PC-9 (cell line): ENCODE measurements at regions of chr6 and their contacts with region 1.

Region 1: GRCh38 chr6:139407718-139408222 is 33.3 kb upstream of the CITED2 start:
- DNase-seq: peak; percentile 51 to 100
- H3K4me3 ChIP-seq: peak overlapping the region; percentile 15; the same call in 1 of the 2 replicates
- H3K27ac ChIP-seq: peak overlapping the region; percentile 94
- H3K4me1 ChIP-seq: peaks cover 41% of the 10 kb centered on the region
- H3K27me3 ChIP-seq: no peaks in the 10 kb centered on the region
- CTCF ChIP-seq: no peak

Region 2: DNA sequence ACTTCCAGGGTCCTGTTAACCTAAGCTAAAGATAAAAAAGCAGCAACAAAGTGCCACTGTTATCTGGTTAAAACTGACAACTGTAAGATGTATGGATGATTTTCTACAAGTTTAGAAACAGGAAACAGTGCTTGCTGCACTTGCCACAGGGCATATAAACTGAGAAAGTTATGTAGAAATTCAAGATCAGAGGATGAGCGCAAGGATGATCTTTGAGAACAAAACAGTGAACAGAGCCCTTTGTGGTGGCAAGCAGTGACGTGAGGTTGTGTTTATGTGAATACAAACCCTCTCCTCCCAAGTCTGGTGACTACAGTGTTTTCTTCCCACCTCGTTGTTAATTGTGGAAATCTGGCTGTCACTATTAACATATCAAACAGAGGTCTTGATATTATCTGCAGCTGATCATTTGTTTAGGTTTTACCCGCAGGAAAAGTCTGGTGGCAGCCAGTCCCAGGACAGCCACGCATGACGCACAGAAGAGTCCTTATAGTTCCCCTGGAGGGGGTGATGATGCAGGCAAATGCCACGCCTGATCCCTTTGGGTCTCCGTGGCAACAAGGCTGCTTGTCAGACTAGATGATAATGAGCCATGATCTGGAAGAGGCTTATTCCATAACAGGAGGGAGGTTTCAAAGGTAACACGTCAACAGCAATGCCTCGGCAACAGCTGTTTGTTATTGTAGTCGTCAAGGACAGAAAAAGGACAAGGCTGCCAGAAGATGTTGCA is 1583.8 kb before region 1 on chr6:
- CTCF ChIA-PET with region 1: no interaction called
- POLR2A ChIA-PET with region 1: no interaction called
- intact Hi-C with region 1: no loop called
- DNase-seq: no peak
- H3K4me3 ChIP-seq: no peak overlapping the region
- H3K27ac ChIP-seq: no peak overlapping the region
- H3K4me1 ChIP-seq: peaks cover 20% of the 10 kb centered on the region
- H3K27me3 ChIP-seq: no peaks in the 10 kb centered on the region
- CTCF ChIP-seq: no peak

Region 3: DNA sequence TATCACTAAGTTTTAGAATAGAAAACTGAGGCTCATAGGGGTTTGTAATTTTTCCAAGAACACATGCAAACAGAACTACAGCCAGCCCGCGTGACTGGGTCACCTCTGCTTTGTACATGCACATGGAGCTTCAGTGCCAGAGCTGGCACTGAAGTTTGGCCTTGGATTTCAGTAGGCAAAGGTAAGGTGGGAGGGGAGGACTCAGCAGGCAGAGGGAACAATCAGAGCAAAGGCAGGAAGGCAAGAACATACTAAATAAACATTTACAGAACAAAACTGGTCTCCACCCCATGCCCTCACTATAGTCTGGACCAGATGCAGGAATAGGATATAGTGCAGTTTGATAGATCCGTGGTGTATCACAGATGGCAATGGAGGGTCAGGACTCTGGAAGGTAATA is 392.8 kb before region 1 on chr6:
- CTCF ChIA-PET with region 1: no interaction called
- POLR2A ChIA-PET with region 1: no interaction called
- intact Hi-C with region 1: no loop called
- DNase-seq: no peak
- H3K4me3 ChIP-seq: no peak overlapping the region
- H3K27ac ChIP-seq: no peak overlapping the region
- H3K4me1 ChIP-seq: 0 out of 2 replicates have a peak, but pooled peaks cover 6% of the 10 kb centered on the region
- H3K27me3 ChIP-seq: no peaks in the 10 kb centered on the region
- CTCF ChIP-seq: no peak

Region 4: GRCh38 chr6:139418480-139419117 is 10.8 kb after region 1 on chr6:
- CTCF ChIA-PET with region 1: interaction called, 21 read pairs
- POLR2A ChIA-PET with region 1: no interaction called
- intact Hi-C with region 1: no loop called
- DNase-seq: no peak
- H3K4me3 ChIP-seq: no peak overlapping the region
- H3K27ac ChIP-seq: no peak overlapping the region
- H3K4me1 ChIP-seq: no peaks in the 10 kb centered on the region; the same call in 1 of the 2 replicates
- H3K27me3 ChIP-seq: no peaks in the 10 kb centered on the region
- CTCF ChIP-seq: no peak

Region 5: DNA sequence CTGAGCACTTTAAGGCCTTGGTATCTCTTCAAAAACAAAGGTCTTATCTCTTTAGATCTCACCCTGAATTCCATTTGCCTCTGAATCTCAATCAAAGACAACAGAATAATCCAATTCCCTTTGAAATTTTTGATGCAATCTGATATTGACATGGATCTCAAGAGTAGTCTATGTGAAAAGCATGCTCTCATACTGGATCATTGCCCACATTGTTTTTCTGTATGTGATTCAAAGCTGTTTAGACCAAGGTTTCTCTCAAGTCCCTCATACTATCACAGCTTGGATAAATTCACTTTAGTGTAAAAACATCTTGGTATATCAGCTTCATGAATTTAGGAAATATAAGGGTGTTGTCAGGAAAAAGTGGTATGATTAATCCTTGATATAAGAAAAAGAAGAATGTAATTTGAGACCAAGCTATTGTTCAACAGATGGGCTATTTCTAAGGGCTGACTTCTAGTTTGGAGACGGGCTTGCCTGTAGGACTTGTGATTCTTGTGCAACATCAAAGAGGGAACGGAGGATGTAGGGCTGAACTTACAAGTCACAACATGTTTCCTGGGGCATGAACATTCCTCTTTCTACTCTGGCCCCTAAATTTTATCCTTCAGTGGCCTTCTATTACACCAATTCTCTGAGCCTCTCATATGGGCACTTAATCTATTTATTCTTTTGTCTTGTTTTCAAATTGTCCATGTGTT is 44.6 kb after region 1 on chr6:
- CTCF ChIA-PET with region 1: no interaction called
- POLR2A ChIA-PET with region 1: no interaction called
- intact Hi-C with region 1: loop called (anchors 5 kb)
- DNase-seq: peak; percentile 16 to 33
- H3K4me3 ChIP-seq: no peak overlapping the region
- H3K27ac ChIP-seq: no peak overlapping the region
- H3K4me1 ChIP-seq: peaks cover 20% of the 10 kb centered on the region
- H3K27me3 ChIP-seq: no peaks in the 10 kb centered on the region
- CTCF ChIP-seq: no peak

Region 6: DNA sequence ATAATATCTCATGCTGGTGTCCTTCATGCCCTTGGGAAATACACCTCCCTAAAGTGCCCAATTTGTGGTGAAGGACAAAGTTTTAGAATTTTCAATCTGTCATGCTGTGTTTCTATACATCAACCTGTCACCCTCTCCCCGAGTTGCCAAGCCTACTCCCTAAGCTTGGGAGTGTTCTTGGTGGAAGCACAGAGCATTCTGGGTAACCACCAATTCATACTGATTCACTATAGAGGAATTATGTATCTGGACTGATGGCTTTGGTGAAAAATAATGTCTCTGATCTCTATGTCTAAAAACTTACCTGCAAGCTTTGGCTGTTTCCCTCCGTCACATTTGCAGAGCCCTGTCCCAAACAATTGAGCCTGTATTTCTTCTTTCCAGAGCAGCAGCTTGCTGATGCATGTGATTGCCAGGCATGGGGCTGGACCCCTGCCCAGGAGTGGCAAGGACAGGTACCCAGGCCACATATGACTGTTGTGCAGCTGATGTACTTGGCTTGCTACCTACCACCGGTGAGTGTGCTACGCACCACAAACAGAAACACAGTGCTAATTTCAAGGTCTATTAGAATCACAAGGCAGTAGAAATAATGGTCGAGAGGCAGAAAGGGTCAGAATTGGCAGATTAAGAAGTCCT is 169.5 kb after region 1 on chr6:
- CTCF ChIA-PET with region 1: no interaction called
- POLR2A ChIA-PET with region 1: no interaction called
- intact Hi-C with region 1: no loop called
- DNase-seq: peak in 1 of 2 experiments; percentile 26
- H3K4me3 ChIP-seq: no peak overlapping the region
- H3K27ac ChIP-seq: no peak overlapping the region
- H3K4me1 ChIP-seq: peaks cover 2% of the 10 kb centered on the region
- H3K27me3 ChIP-seq: no peaks in the 10 kb centered on the region
- CTCF ChIP-seq: no peak

Region 7: GRCh38 chr6:139623372-139623771 is 215.6 kb after region 1 on chr6:
- CTCF ChIA-PET with region 1: no interaction called
- POLR2A ChIA-PET with region 1: interaction called, 20 read pairs
- intact Hi-C with region 1: no loop called
- DNase-seq: no peak
- H3K4me3 ChIP-seq: no peak overlapping the region
- H3K27ac ChIP-seq: no peak overlapping the region
- H3K4me1 ChIP-seq: no peaks in the 10 kb centered on the region
- H3K27me3 ChIP-seq: no peaks in the 10 kb centered on the region
- CTCF ChIP-seq: no peak

Region 8: GRCh38 chr6:139743664-139744437 is 336.1 kb after region 1 on chr6:
- CTCF ChIA-PET with region 1: no interaction called
- POLR2A ChIA-PET with region 1: interaction called, 4 read pairs
- intact Hi-C with region 1: loop called (anchors 2 kb)
- DNase-seq: peak in 1 of 2 experiments; percentile 98
- H3K4me3 ChIP-seq: no peak overlapping the region
- H3K27ac ChIP-seq: peak overlapping the region; percentile 45
- H3K4me1 ChIP-seq: peaks cover 23% of the 10 kb centered on the region
- H3K27me3 ChIP-seq: no peaks in the 10 kb centered on the region
- CTCF ChIP-seq: no peak

Region 9: GRCh38 chr6:140153703-140154102 is 745.9 kb after region 1 on chr6:
- CTCF ChIA-PET with region 1: no interaction called
- POLR2A ChIA-PET with region 1: no interaction called
- intact Hi-C with region 1: no loop called
- DNase-seq: peak in 1 of 2 experiments; percentile 12
- H3K4me3 ChIP-seq: no peak overlapping the region
- H3K27ac ChIP-seq: no peak overlapping the region
- H3K4me1 ChIP-seq: no peaks in the 10 kb centered on the region
- H3K27me3 ChIP-seq: no peaks in the 10 kb centered on the region
- CTCF ChIP-seq: no peak